Activated T-helper 1 cell treated with anti-CD3 and anti-CD28 coated beads, Interleukin-12 subunit alpha, Interleukin-12 subunit beta, Interleukin-2, Interleukin-4 antibody, amounts not matched to agents 30 ng/mL and 10 ng/mL and 1 ng/mL, durations not matched to agents 14 hours and 24 hours and 36 hours (primary cell): ENCODE measurements at regions of chr21 and their contacts with region 1.

Region 1: DNA sequence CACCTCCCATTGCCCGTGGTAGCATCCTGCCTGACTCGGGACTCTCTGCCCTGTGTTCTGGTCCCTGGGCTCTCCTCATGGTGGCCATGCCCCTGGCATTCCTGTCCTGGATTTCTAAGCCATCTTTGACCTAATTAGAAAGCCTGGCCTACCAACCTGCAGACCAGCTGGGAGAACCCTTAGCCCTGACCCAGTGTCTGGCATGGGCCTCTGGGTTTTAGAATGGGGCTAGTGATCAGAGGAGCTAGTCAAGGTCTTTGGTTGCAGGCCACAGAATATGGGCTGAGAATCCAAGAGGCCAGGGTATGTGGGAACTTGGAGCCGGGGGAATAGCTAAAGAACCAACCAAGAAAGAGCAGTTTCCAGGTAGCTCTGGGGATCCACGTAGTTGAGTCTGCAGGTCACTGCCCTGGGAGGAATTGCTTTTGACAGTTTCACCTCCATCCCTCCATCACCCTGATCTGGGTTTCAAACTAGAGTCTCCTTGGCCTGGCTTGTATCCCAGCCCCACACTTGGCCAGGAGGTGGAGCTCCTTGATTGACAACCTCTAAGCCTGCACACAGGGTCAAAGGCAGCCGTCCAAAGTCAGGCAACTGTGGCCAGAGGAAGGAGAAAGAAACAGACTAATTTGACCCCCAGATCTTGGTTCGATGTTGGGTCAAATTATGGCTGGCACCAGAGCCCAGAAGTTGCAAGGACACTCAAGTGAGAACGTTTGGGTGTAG is 54.7 kb upstream of the ABCG1 start:
- DNase-seq: peak; percentile 46
- H3K4me3 Mint-ChIP-seq: no peak overlapping the region
- H3K27ac Mint-ChIP-seq: peak overlapping the region; percentile 14
- H3K4me1 Mint-ChIP-seq: peaks cover 7% of the 10 kb centered on the region
- H3K27me3 Mint-ChIP-seq: peaks cover 4% of the 10 kb centered on the region

Region 2: DNA sequence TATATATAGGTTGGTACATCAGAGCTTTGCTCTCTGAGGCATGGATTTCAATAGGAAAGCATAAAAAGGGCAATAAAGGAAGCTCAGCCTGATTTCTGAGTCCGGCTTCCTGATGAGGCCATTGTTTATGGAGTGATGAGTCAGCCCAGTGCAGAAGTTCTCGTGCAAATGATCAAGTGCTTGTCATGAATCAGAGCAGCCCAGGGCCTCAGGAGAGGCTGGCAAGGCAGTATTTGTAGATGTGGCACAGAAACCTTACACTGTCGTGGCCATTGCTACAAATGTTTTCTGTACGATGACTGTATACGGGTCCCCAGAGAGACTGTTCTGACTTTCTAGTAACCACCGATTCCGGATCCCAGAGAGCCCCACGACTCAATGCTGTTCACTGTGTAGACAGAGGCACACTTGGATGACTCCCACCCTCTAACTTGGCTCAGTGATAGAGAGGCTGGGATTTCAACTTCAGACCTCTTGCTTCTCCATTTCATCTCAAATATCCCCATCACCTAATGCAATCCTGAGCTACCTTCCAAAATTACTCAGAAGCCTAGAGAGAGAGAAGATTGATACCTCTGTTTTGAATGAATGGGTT is 66.3 kb before region 1 on chr21:
- intact Hi-C with region 1: no loop called
- DNase-seq: no peak
- H3K4me3 Mint-ChIP-seq: no peak overlapping the region
- H3K27ac Mint-ChIP-seq: no peak overlapping the region
- H3K4me1 Mint-ChIP-seq: no peaks in the 10 kb centered on the region
- H3K27me3 Mint-ChIP-seq: peaks cover 10% of the 10 kb centered on the region

Region 3: DNA sequence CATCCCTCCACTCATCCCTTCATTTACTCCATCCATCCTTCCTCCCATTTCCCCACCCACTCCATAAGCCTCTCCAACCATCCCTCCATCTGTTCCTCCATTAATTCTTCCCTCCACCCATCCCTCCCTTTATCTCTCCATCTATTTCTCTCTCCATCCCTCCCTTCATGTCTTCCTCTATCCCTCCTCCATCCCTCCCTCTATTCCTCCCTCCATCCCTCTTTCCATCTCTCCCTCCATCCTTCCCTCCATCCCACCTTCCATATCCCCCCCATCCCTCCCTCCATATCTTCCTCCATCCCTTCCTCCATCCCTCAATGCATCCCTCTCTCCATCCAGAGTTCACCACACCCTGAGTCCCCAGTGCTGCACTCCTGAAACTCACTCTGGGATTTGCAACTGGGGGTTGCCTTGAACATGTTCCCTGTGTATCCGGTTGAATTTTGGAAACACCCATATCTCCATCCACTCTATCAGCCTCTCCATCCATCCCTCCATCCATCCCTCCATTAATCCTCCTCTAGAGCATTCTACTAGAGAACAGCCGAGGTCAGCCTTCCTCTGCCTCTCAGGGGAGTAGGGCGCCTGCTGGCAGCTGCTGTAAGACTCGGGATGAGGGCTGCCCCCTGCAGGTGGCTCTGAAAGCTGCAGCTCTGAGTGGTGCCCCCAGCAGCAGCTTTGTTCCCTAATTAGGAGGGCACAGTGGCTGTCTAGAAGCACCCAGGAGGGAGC is 94.1 kb after region 1 on chr21:
- intact Hi-C with region 1: loop called (anchors 1 kb)
- DNase-seq: peak; percentile 63
- H3K4me3 Mint-ChIP-seq: no peak overlapping the region
- H3K27ac Mint-ChIP-seq: no peak overlapping the region
- H3K4me1 Mint-ChIP-seq: peaks cover 6% of the 10 kb centered on the region
- H3K27me3 Mint-ChIP-seq: peaks cover 4% of the 10 kb centered on the region

Region 4: DNA sequence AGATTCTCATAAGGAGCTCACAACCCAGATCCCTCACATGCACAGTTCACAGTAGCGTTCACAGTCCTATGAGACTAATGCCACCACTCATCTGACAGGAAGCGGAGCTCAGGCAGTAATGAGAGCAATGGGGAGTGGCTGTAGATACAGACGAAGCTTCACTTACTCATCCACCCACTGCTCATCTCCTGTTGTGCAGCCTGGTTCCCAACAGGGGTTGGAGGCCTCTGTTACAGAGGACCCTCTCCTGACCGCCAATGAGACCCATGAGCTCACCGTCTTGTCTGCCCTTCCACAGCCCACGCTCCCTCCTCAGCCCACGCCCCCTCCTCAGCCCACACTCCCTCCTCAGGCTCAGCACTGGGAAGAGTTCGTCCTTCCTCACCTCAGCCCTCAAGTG is 292.2 kb after region 1 on chr21:
- intact Hi-C with region 1: loop called (anchors 5 kb)
- DNase-seq: peak; percentile 33
- H3K4me3 Mint-ChIP-seq: no peak overlapping the region
- H3K27ac Mint-ChIP-seq: peak overlapping the region; percentile 59
- H3K4me1 Mint-ChIP-seq: peaks cover 52% of the 10 kb centered on the region
- H3K27me3 Mint-ChIP-seq: no peaks in the 10 kb centered on the region